HepG2 (cell line): ENCODE measurements at regions of chr6 and their contacts with region 1.

Region 1: GRCh38 chr6:64012351-64013001 is 376.9 kb downstream of the PHF3 start:
- DNase-seq: peak; percentile 61
- ATAC-seq: peak; percentile 99
- H3K4me3 ChIP-seq: no peak overlapping the region
- H3K27ac ChIP-seq: no peak overlapping the region
- H3K4me1 ChIP-seq: no peaks in the 10 kb centered on the region
- H3K27me3 ChIP-seq: no peaks in the 10 kb centered on the region; a peak in 1 of 5 replicates
- CTCF ChIP-seq: peak; percentile 93
- EP300 ChIP-seq: no peak
- POLR2A ChIP-seq: no peak
- RAD21 ChIP-seq: peak; percentile 93

Region 2: GRCh38 chr6:63859528-63859927 is 152.9 kb before region 1 on chr6:
- CTCF ChIA-PET with region 1: no interaction called
- POLR2A ChIA-PET with region 1: no interaction called
- in situ Hi-C with region 1: no loop called
- intact Hi-C with region 1: no loop called
- DNase-seq: no peak
- ATAC-seq: no peak
- H3K4me3 ChIP-seq: no peak overlapping the region
- H3K27ac ChIP-seq: no peak overlapping the region
- H3K4me1 ChIP-seq: no peaks in the 10 kb centered on the region
- H3K27me3 ChIP-seq: no peaks in the 10 kb centered on the region; a peak in 1 of 5 replicates
- CTCF ChIP-seq: no peak
- EP300 ChIP-seq: no peak
- POLR2A ChIP-seq: no peak
- RAD21 ChIP-seq: no peak

Region 3: DNA sequence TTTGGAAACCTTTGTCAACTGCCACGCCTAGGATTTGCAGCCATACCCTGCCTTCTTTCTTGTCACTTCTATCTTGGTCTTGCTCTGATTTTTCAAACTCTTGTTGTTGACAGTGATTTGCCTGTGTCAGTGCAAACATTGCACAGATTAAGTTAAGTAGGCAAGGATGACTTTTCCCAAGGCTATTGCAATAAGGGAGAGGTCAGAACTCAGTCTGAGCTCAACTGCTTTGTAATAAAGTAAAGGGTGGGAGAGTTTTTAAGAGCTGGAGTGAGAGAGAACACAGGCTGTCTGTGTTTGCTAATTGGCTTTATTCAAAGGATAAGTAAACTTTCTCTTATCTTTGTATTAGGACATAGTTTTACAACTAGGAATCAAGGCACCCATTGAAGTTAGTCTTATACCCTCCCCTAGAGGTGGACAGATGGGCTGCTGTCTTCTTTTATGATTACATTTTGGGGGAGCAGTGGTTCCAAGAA is 71.7 kb after region 1 on chr6:
- CTCF ChIA-PET with region 1: no interaction called
- POLR2A ChIA-PET with region 1: no interaction called
- in situ Hi-C with region 1: no loop called
- intact Hi-C with region 1: loop called (anchors 1 kb)
- DNase-seq: peak; percentile 86
- ATAC-seq: peak; percentile 95
- H3K4me3 ChIP-seq: no peak overlapping the region
- H3K27ac ChIP-seq: no peak overlapping the region
- H3K4me1 ChIP-seq: peaks cover 18% of the 10 kb centered on the region
- H3K27me3 ChIP-seq: peaks cover 0 to 5% of the 10 kb centered on the region in 2 experiments; a peak in 1 of 5 replicates
- CTCF ChIP-seq: peak; percentile 52
- EP300 ChIP-seq: peak in 1 of 2 experiments; percentile 58; a peak in 1 of 4 replicates
- POLR2A ChIP-seq: no peak
- RAD21 ChIP-seq: no peak

Region 4: GRCh38 chr6:64160486-64160885 is 148.0 kb after region 1 on chr6:
- CTCF ChIA-PET with region 1: no interaction called
- POLR2A ChIA-PET with region 1: no interaction called
- in situ Hi-C with region 1: no loop called
- intact Hi-C with region 1: loop called (anchors 10 kb)
- DNase-seq: no peak
- ATAC-seq: no peak
- H3K4me3 ChIP-seq: no peak overlapping the region
- H3K27ac ChIP-seq: no peak overlapping the region
- H3K4me1 ChIP-seq: no peaks in the 10 kb centered on the region
- H3K27me3 ChIP-seq: no peaks in the 10 kb centered on the region
- CTCF ChIP-seq: no peak
- EP300 ChIP-seq: no peak
- POLR2A ChIP-seq: no peak
- RAD21 ChIP-seq: no peak

Region 5: DNA sequence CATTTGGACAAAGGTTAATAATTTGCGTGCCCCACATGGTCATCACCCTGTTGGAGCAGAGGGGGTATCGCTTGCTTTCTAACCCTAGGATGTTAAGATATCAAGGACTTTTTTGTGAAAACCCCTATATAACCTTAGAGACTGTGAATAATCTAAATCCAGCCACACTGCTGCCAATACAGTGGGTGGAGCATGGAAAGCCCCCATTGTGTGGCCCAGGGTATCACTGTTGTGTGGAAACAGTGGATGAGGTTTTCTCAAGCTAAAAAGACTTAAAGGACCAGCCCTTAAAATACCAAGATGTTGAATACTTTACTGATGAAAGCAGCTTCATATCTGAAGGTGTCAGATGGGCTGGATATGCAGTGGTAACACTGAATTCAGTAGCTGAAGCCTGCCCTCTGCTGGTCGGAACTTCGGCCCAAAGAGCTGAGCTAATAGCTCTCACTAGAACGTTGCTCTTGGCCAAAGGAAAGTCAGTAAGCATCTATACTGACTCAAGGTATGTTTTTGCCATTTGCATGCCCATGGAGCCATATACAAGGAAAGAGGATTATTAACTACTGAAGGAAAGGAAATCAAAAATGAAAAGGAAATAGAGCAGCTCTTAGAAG is 318.3 kb after region 1 on chr6:
- CTCF ChIA-PET with region 1: interaction called, 61 read pairs
- POLR2A ChIA-PET with region 1: no interaction called
- in situ Hi-C with region 1: loop called (anchors 5 kb)
- intact Hi-C with region 1: loop called (anchors 1 kb)
- DNase-seq: peak; percentile 55
- ATAC-seq: peak; percentile 87
- H3K4me3 ChIP-seq: no peak overlapping the region
- H3K27ac ChIP-seq: no peak overlapping the region
- H3K4me1 ChIP-seq: no peaks in the 10 kb centered on the region
- H3K27me3 ChIP-seq: no peaks in the 10 kb centered on the region
- CTCF ChIP-seq: peak; percentile 93
- EP300 ChIP-seq: no peak
- POLR2A ChIP-seq: no peak
- RAD21 ChIP-seq: peak; percentile 73